ENCODE measurements at regions of chr19 and their contacts with region 1.

Region 1: DNA sequence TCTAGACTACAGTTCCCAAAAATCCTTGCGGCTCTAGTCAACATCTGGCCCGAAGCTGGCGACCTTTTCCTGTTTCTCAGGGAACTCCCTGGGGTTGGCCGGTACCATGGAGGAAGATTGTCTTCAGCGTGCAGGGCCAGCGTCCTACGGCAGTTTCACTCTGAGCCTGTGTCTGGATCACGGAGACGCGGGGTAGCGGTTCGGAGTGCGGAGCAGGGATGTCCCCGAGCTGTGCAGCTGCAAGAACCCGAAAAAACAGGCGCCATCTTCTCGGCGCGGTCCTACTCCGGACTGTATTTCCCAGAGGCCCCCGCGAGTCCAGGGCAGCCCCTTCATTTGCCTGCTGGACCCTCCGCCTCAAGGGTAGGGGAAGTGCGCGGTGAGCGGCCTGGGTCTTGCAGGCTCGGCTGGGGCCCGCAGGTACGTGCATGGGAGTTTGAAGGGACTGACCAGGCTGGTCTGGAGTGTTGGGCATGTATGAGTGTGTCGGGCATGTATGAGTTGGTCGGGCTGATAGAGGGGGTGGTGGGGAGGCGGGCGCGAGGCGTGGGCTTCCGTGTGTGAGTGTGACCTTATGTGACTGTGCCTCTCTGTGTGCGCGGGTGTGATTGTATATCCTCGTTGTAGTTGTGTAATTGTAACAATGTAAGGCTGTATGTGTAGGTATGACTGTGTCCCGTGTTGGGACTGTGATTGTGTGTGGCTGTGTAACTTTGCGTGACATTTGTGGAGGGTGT is at the start of gene ZNF383:
- DNase-seq: peak; percentile 89 to 93
- ATAC-seq: peak; percentile 92 to 98 (median 96)
- H3K4me3 ChIP-seq: peak within 1 kb of the TSS; percentile 80
- H3K27ac ChIP-seq: peak within 1 kb of the TSS; percentile 85
- H3K4me1 ChIP-seq: no peaks in the 10 kb centered on the region
- H3K27me3 ChIP-seq: no peaks in the 10 kb centered on the region
- CTCF ChIP-seq: no peak
- total RNA-seq, gene ZNF383: 4.4 to 11.7 (median 8.1) TPM

Region 2: DNA sequence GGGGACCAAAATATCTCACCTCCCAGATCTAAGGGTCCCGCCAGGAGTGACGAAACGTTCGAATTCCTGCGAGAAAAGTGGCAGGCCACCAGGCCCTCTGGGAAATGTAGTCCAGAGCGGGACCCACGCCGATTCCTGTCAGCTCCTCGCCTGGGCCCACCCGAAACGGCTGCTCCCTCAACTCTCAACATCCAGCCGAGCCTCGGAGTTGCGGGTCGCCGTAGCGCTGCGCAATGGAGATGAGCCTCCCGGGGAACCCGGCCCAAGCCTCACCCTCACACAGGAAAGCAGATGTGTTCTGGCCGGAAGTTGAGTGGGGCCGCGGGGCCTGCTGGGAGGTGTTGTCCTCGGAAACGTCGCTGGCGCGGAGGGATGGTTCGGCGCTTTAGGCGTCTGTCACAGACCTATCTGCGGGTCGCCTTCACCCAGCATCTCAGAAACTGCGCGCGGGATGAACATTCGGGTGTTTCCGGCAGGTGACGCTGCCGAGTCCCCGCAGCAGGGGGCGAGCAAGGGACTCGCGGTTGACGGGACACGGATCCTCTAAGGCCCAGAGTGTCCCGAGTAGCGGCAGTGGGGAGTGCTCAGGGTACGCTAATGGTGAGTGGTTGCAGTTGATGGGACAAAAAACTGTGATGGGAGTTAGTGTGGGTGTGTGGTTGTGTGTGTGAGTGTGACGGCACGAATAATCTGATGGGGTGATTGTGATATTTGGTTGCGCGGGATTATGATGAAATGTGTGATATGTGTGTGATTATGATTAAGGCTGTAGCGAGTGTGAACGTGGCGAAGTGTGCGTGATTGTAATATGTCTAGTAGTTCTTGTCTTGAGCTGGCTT is 301.8 kb before region 1 on chr19 and contains the starts of genes ZNF568 and ZNF829:
- intact Hi-C with region 1: loop called in 1 of 2 experiments (anchors 5 kb)
- DNase-seq: peak; percentile 88 to 95
- ATAC-seq: peak; percentile 96 to 99 (median 98)
- H3K4me3 ChIP-seq: peak within 1 kb of the TSS; percentile 95
- H3K27ac ChIP-seq: peak within 1 kb of the TSS; percentile 97
- H3K4me1 ChIP-seq: no peaks in the 10 kb centered on the region
- H3K27me3 ChIP-seq: no peaks in the 10 kb centered on the region
- CTCF ChIP-seq: peak; percentile 57
- total RNA-seq, gene ZNF568: 4.8 to 13.9 (median 7.3) TPM
- total RNA-seq, gene ZNF829: 0.92 to 1.5 (median 1.1) TPM

Region 3: GRCh38 chr19:36973021-36973843 is 244.8 kb before region 1 on chr19:
- intact Hi-C with region 1: loop called in 1 of 2 experiments (anchors 5 kb)
- DNase-seq: peak; percentile 84 to 87
- ATAC-seq: peak; percentile 94 to 97 (median 96)
- H3K4me3 ChIP-seq: peak overlapping the region; percentile 82
- H3K27ac ChIP-seq: peak overlapping the region; percentile 79
- H3K4me1 ChIP-seq: no peaks in the 10 kb centered on the region
- H3K27me3 ChIP-seq: no peaks in the 10 kb centered on the region
- CTCF ChIP-seq: peak; percentile 64

Region 4: DNA sequence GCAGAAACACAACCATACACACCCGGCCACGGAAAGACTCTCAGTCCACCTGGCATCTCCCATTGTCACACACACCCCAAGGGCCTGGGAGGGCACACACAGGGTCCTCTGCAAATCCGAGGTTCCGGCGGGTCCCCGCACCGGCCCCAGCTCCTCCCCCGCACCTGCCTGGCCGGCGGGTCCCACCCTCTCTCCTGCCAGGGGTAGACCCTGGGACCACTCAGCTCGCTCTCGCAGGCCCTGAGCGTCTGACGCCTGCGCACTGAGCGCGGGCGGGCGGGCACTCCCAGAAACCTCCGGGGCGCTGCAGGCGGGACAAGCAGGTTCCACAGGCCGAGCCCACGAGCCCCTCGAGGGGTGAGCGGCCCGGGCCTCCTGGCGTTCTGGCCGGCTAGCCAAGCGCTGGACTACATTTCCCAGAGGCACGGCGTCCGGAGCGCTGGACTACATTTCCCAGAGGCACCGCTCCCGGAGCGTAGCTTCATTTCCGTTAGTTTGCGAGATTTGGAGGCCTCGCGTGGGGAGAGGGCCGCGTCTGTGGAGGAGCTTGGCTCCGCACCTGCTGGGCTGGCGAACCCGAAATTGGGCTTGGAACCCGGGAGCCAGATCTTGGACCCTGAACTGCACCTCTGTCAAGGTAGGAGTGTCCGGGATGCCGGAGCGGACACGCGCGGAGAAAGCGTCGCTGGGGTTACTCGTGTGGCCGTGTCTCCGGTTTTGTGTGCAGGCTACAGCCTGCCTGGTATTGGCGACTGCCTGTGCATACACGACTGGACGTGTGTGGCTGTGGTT is 139.9 kb before region 1 on chr19 and contains the start of gene ZNF420:
- intact Hi-C with region 1: loop called in 1 of 2 experiments (anchors 10 kb)
- DNase-seq: peak; percentile 94 to 96
- ATAC-seq: peak; percentile 99 to 100 (median 100)
- H3K4me3 ChIP-seq: peak within 1 kb of the TSS; percentile 77
- H3K27ac ChIP-seq: peak within 1 kb of the TSS; percentile 79
- H3K4me1 ChIP-seq: peaks cover 8% of the 10 kb centered on the region
- H3K27me3 ChIP-seq: no peaks in the 10 kb centered on the region
- CTCF ChIP-seq: no peak
- total RNA-seq, gene ZNF420: 4.4 to 10.6 (median 7.1) TPM

Region 5: GRCh38 chr19:37114020-37114419 is 104.0 kb before region 1 on chr19:
- intact Hi-C with region 1: no loop called
- DNase-seq: no peak
- ATAC-seq: no peak
- H3K4me3 ChIP-seq: no peak overlapping the region
- H3K27ac ChIP-seq: no peak overlapping the region
- H3K4me1 ChIP-seq: no peaks in the 10 kb centered on the region
- H3K27me3 ChIP-seq: no peaks in the 10 kb centered on the region
- CTCF ChIP-seq: no peak

Region 6: DNA sequence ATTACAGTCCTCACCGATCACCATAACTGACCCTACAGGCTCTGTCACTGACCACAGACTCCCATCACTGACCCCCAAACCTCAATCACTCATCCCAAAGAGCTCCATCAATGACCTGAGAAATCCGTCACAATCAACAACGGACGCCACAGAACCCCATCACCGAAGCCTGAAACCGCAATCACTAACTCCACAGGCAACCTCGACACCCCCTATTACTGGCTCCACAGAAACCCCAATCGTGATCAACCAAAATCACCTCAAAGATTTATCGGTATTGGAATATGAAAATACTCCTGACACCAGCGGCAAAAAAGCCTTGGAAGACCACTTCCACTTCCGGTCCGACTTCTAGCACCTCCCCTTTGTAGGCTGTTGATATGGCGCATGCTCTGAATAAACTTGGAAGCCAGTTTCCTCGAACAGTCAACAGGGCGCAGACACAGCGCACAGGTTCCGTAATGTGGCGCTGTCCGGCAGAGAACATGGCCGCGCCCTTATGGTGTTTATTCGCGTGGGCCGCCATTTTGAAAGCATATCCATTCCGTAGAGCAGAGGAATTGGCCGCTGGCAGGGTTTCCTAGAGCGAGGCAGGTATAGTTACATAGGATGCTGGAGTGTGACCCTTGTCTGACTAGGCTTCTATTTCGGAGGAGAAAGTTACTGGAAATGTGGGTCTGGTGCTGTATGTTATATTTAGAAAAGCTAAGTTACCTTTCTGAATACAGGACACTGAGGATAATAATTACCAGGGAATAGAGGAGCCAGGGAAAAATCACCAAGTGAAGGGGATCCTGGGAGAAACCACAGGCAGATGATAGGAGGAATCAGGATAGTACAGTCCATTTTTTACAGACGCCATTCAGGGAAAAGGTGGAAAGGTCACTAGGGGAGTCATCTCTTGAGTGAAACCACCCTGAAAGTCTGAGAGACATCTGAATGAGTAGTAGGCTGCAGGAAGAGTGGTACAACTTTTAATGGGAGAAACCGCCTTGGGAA is 45.4 kb before region 1 on chr19 and contains the start of gene ZNF585A:
- intact Hi-C with region 1: loop called in 1 of 2 experiments (anchors 5 kb)
- DNase-seq: peak; percentile 91 to 96
- ATAC-seq: peak; percentile 99 to 100 (median 100)
- H3K4me3 ChIP-seq: peak within 1 kb of the TSS; percentile 77
- H3K27ac ChIP-seq: peak within 1 kb of the TSS; percentile 87
- H3K4me1 ChIP-seq: no peaks in the 10 kb centered on the region
- H3K27me3 ChIP-seq: no peaks in the 10 kb centered on the region
- CTCF ChIP-seq: peak; percentile 24
- total RNA-seq, gene ZNF585A: 6.9 to 9.6 (median 7.8) TPM

Region 7: GRCh38 chr19:37370880-37371661 is 153.0 kb after region 1 on chr19 and contains the start of gene ZNF527:
- intact Hi-C with region 1: loop called (anchors 10 kb)
- DNase-seq: peak; percentile 98
- ATAC-seq: peak; percentile 99 to 100 (median 100)
- H3K4me3 ChIP-seq: peak within 1 kb of the TSS; percentile 82
- H3K27ac ChIP-seq: peak within 1 kb of the TSS; percentile 89
- H3K4me1 ChIP-seq: no peaks in the 10 kb centered on the region
- H3K27me3 ChIP-seq: no peaks in the 10 kb centered on the region
- CTCF ChIP-seq: no peak
- total RNA-seq, gene ZNF527: 1.8 to 4.0 (median 3.6) TPM

Region 8: DNA sequence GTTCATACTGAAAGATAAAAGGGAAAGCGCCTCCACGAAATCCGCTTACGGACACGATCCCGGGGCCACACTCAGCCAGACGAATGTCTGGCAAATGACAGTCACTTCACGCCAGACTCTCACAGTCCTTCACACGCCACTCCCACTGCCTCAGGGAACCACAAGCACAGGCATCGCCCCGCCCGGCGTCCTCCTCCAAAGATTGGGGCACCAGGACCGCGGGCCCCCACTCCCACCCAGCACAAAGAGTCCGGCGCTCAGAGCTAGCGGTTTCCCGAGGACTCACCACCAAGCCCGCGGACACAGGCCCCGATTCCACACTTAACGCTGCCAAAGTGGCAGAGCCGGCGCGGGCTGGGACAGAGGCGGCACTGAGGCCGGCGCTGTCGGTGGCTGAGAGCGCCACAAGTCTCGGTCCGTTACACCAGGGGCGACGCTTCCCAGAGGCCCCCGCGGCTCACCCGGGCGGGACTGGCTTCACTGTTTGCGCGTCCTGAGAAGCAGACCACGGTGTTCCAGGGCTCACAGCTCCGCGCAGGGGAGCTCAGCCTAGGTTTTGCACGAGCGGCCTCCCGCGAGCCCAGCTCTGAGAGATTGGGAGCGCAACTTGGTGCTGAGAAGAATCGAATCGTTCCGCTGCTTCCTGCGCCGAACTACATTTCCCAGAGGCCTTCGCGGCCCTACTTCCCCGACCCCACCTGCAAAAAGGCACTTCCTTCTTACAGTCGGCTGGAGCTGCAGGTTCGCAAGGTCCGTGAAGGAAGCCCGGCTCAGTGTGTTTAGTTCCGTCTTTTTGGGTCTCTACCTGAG is 249.0 kb after region 1 on chr19 and contains the start of gene ZNF569:
- intact Hi-C with region 1: loop called in 1 of 2 experiments (anchors 10 kb)
- DNase-seq: peak; percentile 89 to 94
- ATAC-seq: peak; percentile 87 to 91 (median 90)
- H3K4me3 ChIP-seq: peak within 1 kb of the TSS; percentile 93
- H3K27ac ChIP-seq: peak within 1 kb of the TSS; percentile 91
- H3K4me1 ChIP-seq: peaks cover 9% of the 10 kb centered on the region
- H3K27me3 ChIP-seq: no peaks in the 10 kb centered on the region
- CTCF ChIP-seq: no peak
- total RNA-seq, gene ZNF569: 3.3 to 5.3 (median 3.8) TPM